HAP-1 (cell line): ENCODE measurements at regions of chr2 and their contacts with region 1.

Region 1: GRCh38 chr2:153478334-153479261 is at the start of gene RPRM:
- DNase-seq: peak; percentile 77 to 92
- H3K4me3 ChIP-seq: peak within 1 kb of the TSS; percentile 34
- H3K4me1 ChIP-seq: peaks cover 42% of the 10 kb centered on the region
- H3K27me3 ChIP-seq: no peaks in the 10 kb centered on the region

Region 2: DNA sequence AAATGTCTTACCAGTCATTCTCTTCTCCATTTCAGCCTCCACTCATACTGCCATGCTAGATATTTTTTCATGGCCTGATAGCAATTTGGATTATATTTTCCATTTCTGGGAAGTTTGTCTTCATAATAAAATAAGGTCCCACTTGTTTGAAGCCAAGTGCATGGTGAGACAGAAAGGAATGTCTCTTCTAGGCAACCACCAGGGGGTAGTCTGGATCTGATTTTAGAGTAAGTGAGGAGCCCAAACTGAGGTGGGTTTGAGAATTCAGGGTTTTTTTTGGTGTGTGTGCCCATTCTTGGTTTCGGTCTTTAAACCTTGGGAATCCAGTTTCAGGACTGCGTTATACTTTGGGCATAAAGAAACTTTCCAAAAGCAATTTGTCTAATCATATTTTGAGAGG is 315.5 kb before region 1 on chr2:
- in situ Hi-C with region 1: loop called (anchors 25 kb)
- DNase-seq: peak; percentile 62 to 69
- H3K4me3 ChIP-seq: no peak overlapping the region
- H3K4me1 ChIP-seq: no peaks in the 10 kb centered on the region
- H3K27me3 ChIP-seq: no peaks in the 10 kb centered on the region

Region 3: GRCh38 chr2:154692927-154693326 is 1214.3 kb after region 1 on chr2:
- in situ Hi-C with region 1: no loop called
- DNase-seq: no peak
- H3K4me3 ChIP-seq: no peak overlapping the region
- H3K4me1 ChIP-seq: no peaks in the 10 kb centered on the region
- H3K27me3 ChIP-seq: no peaks in the 10 kb centered on the region